ENCODE measurements at regions of chr15 and their contacts with region 1.

Region 1: DNA sequence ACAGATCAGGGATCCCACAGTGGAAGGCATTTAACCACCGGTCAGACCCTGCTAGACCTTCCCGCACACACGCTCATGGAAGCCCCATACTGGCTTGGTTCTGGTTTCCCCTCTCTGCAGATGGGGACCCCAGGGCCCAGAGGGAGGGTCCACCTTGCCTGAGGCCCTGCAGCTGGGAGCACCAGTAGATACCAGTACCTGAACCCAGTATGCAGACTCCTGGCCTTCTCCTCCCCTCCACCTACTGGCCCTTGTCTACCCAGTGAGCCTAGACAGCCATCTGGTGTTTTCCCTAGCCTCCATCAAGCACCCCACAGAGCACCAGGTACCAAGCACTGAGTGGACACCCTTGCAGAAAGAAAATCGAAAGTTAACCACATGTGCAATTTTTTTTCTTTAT is 65.1 kb downstream of the MEGF11 start:
- DNase-seq: peak in 3 of 4 donors; percentile 20 to 37 (median 36)
- ATAC-seq: no peak
- H3K4me3 ChIP-seq: no peak overlapping the region
- H3K27ac ChIP-seq: no peak overlapping the region
- H3K4me1 ChIP-seq: no peaks in the 10 kb centered on the region
- H3K27me3 ChIP-seq: no peaks in the 10 kb centered on the region
- CTCF ChIP-seq: peak in 3 of 7 experiments; percentile 24 to 45 (median 40)
- POLR2A ChIP-seq: no peak

Region 2: GRCh38 chr15:65979316-65979715 is 209.1 kb before region 1 on chr15:
- intact Hi-C with region 1: loop called (anchors 10 kb)
- DNase-seq: no peak
- ATAC-seq: no peak
- H3K4me3 ChIP-seq: no peak overlapping the region
- H3K27ac ChIP-seq: no peak overlapping the region
- H3K4me1 ChIP-seq: no peaks in the 10 kb centered on the region
- H3K27me3 ChIP-seq: no peaks in the 10 kb centered on the region
- CTCF ChIP-seq: no peak
- POLR2A ChIP-seq: no peak

Region 3: DNA sequence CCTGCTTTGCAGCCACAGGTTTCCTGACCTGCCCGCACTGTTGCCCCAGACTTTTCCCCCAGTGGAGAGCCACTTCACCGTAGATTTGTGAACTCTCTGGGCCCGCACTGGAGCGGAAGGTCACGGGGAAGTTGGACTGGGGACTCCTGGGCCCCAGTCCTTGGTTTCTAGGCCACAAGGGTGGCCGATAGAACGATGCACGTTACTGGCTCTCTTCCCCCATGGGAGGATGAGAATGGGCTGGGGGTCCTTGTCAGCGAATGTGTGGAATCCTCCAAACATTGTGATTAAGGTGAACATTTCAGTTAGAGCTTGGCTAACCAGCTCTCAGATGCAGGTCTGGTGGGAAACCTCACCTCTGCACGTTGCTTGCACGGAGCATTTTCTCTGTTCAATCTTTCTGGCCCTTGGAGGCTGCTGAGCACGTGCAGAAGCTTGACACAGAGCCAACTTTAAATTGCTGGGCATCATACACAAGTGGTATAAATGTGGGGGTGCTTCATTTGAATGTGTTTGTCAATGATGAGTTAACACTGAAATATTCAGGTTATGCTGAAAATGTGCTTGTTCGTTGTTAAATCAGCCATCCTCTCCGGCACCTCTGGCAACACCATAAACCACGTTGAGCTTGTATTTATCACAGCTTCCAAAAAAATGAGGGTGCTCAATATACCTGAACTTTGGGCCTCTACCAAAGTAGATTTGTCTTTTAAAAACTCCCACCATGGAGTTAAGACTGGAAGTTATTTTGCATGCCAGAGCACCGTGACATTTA is 105.9 kb after region 1 on chr15:
- intact Hi-C with region 1: no loop called
- DNase-seq: peak; percentile 19 to 31 (median 24)
- ATAC-seq: peak; percentile 34
- H3K4me3 ChIP-seq: peak overlapping the region; percentile 38 to 58
- H3K27ac ChIP-seq: peak overlapping the region; percentile 77 to 94 (median 89)
- H3K4me1 ChIP-seq: peaks cover 41% of the 10 kb centered on the region
- H3K27me3 ChIP-seq: no peaks in the 10 kb centered on the region
- CTCF ChIP-seq: no peak
- POLR2A ChIP-seq: peak in 1 of 3 donors; percentile 38